SK-N-SH (cell line): ENCODE measurements at regions of chr20 and their contacts with region 1.

Region 1: DNA sequence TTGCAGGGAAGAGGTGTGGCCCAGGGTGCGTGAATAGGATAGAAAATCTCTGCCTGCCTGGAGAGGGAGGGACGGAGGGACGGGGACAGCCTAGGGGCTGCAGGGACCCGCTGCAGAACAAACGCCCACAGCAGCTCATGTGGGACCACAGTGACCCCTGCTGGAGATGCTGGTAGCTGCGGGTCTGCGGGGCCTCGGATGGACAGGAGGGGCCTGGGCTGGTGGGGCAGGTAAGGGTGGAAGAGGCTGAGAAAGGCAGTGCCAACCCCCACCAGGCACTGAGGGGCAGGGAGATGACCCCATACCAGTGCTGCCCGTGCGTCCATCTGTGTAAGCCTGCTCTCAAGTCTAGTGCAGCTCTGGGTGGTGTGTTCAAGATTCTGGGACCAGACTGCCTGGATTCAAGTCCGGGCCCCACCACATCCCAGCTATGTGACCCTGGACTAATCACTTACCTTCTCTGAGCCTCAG is 39.4 kb downstream of the KIAA1755 start:
- DNase-seq: peak; percentile 94
- H3K4me3 ChIP-seq: peak overlapping the region in 1 of 2 experiments; percentile 3; a peak in 2 of 4 replicates
- H3K27ac ChIP-seq: no peak overlapping the region
- H3K4me1 ChIP-seq: peaks cover 24 to 25% of the 10 kb centered on the region in 2 experiments; a peak in 3 of 4 replicates
- H3K27me3 ChIP-seq: no peaks in the 10 kb centered on the region
- CTCF ChIP-seq: peak; percentile 97
- EP300 ChIP-seq: no peak
- RAD21 ChIP-seq: peak; percentile 95

Region 2: DNA sequence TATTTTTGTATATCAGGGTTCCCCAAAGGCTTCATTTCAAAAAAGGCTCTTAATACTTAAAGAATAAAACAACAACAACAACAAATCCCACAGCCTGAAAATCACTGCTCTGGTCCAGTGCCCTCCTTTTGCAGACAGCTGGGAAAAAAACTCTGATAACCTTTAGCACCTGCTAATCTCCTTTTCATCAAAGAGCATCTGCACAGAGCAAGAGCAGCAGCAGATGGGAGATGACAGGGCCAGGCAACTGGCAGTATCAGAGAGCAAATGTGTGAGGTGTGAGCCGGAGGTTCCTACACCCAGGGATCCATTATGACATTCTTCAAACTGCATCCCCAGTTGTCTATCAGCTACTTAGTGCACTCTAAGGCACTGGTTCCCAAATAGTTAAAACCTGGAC is 213.6 kb before region 1 on chr20:
- CTCF ChIA-PET with region 1: interaction called, 12 read pairs
- POLR2A ChIA-PET with region 1: no interaction called
- DNase-seq: peak; percentile 55
- H3K4me3 ChIP-seq: no peak overlapping the region
- H3K27ac ChIP-seq: no peak overlapping the region
- H3K4me1 ChIP-seq: peaks cover 1 to 11% of the 10 kb centered on the region in 2 experiments; a peak in 2 of 4 replicates
- H3K27me3 ChIP-seq: no peaks in the 10 kb centered on the region
- CTCF ChIP-seq: no peak
- EP300 ChIP-seq: no peak; a peak in 1 of 4 replicates
- RAD21 ChIP-seq: no peak

Region 3: GRCh38 chr20:38113401-38114325 is 107.5 kb before region 1 on chr20:
- CTCF ChIA-PET with region 1: interaction called, 44 read pairs
- POLR2A ChIA-PET with region 1: no interaction called
- DNase-seq: no peak
- H3K4me3 ChIP-seq: no peak overlapping the region
- H3K27ac ChIP-seq: peak overlapping the region; percentile 58 to 65
- H3K4me1 ChIP-seq: peaks cover 38 to 42% of the 10 kb centered on the region in 2 experiments
- H3K27me3 ChIP-seq: no peaks in the 10 kb centered on the region
- CTCF ChIP-seq: peak; percentile 57
- EP300 ChIP-seq: no peak
- RAD21 ChIP-seq: peak; percentile 66

Region 4: DNA sequence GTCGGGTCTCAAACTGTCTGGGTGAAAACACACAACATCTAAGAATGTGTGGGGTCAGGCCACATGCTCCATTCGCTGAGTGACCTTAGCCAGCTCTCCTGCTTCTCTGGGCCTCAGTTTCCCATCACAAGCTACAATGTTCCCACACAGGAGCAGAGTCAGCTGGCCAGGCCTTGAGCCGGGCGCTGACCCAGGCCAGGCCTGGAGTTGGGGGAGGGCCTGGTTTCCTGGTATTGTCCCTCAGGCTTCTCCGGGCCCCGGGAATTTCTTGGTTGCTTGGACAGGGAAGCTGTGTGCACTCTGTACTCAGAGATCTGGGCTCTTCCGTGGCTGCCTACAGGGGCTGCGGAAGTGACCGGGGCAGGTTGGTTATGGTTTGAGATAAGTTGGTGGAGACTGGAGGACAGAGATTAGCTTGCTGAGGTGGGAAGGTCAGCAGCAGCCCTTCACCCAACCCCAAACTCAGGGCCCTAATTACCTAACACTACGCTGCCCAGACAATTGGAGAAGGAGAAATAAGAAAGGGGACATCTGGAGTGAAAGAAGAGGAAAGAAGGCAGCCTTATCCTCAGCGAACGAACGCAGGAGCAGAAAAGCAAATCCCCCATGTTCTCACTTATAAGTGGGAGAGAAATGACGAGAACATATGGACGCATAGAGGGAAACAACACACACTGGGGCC is 62.3 kb before region 1 on chr20:
- CTCF ChIA-PET with region 1: interaction called, 26 read pairs
- POLR2A ChIA-PET with region 1: no interaction called
- DNase-seq: no peak
- H3K4me3 ChIP-seq: no peak overlapping the region
- H3K27ac ChIP-seq: no peak overlapping the region; a peak in 2 of 4 replicates
- H3K4me1 ChIP-seq: peaks cover 26 to 28% of the 10 kb centered on the region in 2 experiments; a peak in 2 of 4 replicates
- H3K27me3 ChIP-seq: no peaks in the 10 kb centered on the region
- CTCF ChIP-seq: no peak
- EP300 ChIP-seq: no peak
- RAD21 ChIP-seq: no peak

Region 5: DNA sequence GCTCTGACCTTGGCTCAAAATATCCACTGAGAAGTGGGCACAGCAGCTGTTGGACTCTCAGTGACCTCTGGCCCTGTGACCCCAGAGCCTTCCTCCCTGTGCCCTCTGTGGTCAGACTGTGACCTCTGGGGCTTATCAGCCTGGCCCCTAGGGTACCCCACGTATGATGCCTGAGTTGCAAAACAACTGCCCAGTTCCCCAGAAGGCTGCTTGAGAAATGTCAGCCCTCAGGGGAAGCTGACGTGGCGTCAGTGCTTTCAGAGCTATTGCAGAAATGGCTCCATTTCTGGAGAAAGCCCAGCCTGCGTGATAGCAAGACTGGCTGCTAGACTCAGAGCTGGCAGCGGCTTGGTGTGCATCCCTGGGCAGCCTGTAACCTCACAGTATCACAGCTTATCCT is 24.6 kb before region 1 on chr20:
- CTCF ChIA-PET with region 1: interaction called, 148 read pairs
- POLR2A ChIA-PET with region 1: no interaction called
- DNase-seq: no peak
- H3K4me3 ChIP-seq: no peak overlapping the region
- H3K27ac ChIP-seq: no peak overlapping the region
- H3K4me1 ChIP-seq: peaks cover 0 to 6% of the 10 kb centered on the region in 2 experiments; a peak in 1 of 4 replicates
- H3K27me3 ChIP-seq: no peaks in the 10 kb centered on the region
- CTCF ChIP-seq: no peak
- EP300 ChIP-seq: no peak
- RAD21 ChIP-seq: no peak

Region 6: GRCh38 chr20:38321959-38322598 is 100.9 kb after region 1 on chr20:
- CTCF ChIA-PET with region 1: interaction called, 15 read pairs
- POLR2A ChIA-PET with region 1: no interaction called
- DNase-seq: peak; percentile 73
- H3K4me3 ChIP-seq: no peak overlapping the region; a peak in 1 of 4 replicates
- H3K27ac ChIP-seq: no peak overlapping the region
- H3K4me1 ChIP-seq: no peaks in the 10 kb centered on the region
- H3K27me3 ChIP-seq: no peaks in the 10 kb centered on the region
- CTCF ChIP-seq: peak; percentile 84
- EP300 ChIP-seq: no peak
- RAD21 ChIP-seq: peak; percentile 87